ENCODE measurements at regions of chr15 and their contacts with region 1.

Region 1: GRCh38 chr15:29050870-29051269 is 165.1 kb downstream of the APBA2 start:
- DNase-seq: no peak
- ATAC-seq: no peak
- H3K4me3 ChIP-seq: no peak overlapping the region
- H3K27ac ChIP-seq: no peak overlapping the region
- H3K4me1 ChIP-seq: no peaks in the 10 kb centered on the region
- H3K27me3 ChIP-seq: peaks cover 0 to 1% (median 0%) of the 10 kb centered on the region in 3 donors
- CTCF ChIP-seq: no peak

Region 2: DNA sequence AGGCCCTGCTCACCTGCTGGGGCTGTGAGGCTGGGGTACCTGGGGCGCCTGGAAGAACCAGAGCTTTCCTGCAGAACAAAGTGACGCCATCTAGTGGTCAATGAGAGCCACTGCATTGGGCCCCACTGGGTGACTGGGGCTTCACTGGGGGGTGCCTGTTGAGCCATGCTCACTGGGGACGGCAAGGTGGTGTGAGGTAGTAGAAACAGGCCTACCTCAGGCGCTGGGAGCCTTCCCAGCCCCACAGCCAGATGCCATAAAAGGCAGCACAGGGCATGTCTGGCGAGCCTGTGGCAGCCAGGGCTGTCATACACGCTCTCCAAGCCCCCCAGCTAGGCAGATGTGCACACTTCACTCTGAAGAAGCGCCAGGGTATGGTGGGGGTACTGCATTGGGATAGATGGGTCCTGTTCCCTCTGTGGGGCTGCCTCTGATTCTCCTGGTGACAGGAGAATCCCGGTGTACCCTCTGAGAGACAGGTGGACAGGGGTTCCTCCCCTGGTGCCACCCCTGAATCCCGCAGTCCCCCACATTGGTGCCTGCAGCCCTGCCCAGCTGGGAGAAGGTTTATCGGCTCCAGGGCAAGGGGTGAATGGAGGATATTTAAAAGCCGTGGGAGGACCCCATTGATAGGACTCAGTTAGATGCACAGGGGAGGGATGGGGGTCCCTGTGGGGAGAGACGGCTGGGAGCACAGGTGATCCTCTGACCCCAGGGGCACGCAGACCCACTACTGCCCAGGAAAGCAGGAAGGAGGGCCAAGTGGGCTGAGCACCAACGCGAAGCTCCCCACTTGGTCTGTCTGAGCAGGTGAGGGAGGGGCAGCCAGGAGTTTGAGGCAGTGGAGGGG is 40.0 kb after region 1 on chr15:
- intact Hi-C with region 1: loop called in 1 of 2 experiments (anchors 5 kb)
- DNase-seq: no peak
- ATAC-seq: no peak
- H3K4me3 ChIP-seq: no peak overlapping the region
- H3K27ac ChIP-seq: no peak overlapping the region
- H3K4me1 ChIP-seq: no peaks in the 10 kb centered on the region
- H3K27me3 ChIP-seq: no peaks in the 10 kb centered on the region
- CTCF ChIP-seq: peak; percentile 28

Measured in psoas muscle (tissue), 8 donors.